SK-MEL-5 (cell line): ENCODE measurements at regions of chr1 and their contacts with region 1.

Region 1: DNA sequence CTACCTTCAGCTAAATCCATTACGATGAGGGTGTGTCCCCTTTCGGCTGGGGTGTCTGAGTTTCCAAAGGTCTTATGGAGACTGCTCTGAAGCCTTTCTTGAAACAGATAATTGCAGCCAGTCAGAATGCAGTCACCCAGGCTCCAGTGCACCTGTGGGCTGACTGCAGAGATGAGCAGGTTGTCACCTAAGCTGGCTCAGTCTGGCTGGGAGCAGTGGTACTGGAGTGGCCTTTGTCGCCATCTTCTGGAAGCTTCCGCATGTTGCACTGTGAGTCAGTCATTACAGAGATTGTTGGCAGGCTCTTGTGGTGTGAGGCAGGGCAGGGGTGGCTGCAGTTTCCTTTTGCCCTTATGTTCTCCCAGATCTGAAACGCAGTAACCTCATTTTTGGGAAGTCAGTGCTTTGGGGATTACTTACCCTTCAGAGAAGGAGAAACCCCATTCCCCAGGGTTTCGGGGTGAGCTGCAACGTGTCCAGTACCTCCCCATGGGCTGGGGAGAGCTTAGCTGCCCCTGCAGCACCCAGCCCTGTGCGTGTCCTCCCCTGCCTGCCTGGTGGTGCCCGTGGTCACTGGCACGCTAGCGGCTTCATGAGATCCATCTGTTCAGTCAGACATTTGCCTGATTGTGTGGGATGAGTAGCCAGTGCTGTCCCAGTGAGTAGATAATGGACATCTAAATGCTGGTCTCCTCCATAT is 48.0 kb downstream of the SMYD2 start:
- DNase-seq: peak; percentile 77

Region 2: GRCh38 chr1:214416417-214416816 is 87.5 kb after region 1 on chr1:
- in situ Hi-C with region 1: no loop called
- DNase-seq: no peak

Region 3: DNA sequence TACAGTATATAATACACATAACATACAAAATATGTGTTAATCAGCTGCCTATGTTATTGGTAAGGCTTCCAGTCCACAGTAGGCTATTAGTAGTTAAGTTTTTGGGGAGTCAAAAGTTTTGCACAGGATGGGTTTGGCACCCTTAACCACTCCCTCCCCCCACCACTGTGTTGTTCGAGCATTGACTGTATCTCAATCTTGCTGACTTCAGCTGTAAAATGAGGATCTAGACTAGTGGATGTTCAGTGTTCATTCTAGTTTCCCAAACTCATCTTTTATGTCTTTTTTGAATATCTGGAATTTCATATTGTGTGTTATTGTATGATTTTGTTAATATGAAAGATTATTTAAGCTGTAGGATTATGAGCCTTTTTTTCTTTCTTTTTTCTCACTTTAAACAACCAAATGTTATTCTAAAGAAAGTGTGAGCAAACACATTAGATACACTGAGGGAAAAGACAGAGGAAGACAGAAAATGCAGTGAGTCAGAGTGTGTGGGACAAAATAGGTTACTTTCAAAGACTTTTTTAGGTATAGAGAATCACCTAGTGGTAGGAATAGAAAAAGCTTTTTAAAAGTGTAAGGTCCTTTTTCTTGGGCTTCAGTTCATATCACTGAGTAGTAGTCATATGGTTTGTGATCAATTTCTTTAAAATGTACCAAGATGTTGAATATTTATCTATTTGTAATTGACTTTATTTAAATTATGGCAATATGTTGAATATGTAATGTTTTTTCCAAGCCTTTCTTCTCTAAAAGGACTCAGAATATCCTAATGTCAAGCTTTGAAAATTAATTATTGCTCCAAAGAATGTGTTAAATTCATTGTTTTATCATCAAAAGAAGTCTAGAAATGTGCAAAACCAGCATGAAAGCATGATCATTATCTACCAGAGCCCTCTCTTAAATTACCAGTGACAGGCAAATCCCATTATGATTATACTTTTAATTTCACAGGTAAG is 256.2 kb after region 1 on chr1:
- in situ Hi-C with region 1: loop called (anchors 25 kb)
- DNase-seq: peak; percentile 70